Thyroid gland (tissue), 4 donors: ENCODE measurements at regions of chr1 and their contacts with region 1.

Region 1: GRCh38 chr1:25796811-25797458 is 3.1 kb upstream of the SELENON start:
- DNase-seq: peak; percentile 87 to 94
- H3K4me3 ChIP-seq: no peak overlapping the region
- H3K27ac ChIP-seq: peak overlapping the region; percentile 69 to 86 (median 72)
- H3K4me1 ChIP-seq: peaks cover 17 to 34% of the 10 kb centered on the region in 2 donors
- H3K27me3 ChIP-seq: no peaks in the 10 kb centered on the region
- CTCF ChIP-seq: peak in 5 of 6 experiments; percentile 72 to 97 (median 88)
- POLR2A ChIP-seq: no peak

Region 2: DNA sequence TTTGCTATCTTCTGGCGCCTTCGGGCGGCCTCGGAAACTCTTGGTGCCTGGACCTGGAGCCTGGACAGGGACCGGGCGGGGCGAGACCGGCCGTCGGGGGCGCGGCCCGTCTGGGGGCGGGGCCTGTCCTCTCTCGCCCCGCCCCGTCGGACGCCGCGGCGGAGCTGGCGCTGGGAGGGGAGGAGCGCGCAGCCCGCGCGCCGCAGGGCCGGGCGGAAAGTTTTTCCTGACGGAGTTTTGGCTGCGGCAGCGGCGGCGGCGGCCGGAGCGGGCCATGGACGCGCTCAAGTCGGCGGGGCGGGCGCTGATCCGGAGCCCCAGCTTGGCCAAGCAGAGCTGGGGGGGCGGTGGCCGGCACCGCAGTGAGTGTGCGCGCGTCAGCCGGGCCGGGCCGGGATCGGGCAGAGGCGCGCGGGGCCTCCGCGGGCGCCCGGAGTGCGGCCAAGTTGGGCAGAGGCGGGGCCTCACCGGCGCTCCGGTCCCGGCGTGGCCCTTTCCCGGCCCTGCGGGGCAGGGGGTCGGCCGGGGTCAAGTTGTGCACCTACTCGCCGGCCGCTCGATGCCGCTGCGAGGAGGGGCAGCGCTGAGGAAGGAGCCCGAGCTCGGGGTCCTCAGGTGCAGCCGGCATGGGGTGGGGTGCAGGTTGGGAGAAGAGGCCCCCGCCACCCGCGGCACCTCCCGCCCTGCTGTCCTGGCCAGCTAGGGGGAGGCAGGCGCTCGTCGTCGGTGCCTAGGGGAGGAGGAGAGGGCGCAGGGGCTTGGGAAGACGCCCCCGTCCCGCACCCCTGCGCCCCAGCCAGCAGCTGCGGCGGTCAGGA is 253.3 kb before region 1 on chr1 and contains the start of gene LDLRAP1:
- intact Hi-C with region 1: loop called (anchors 10 kb)
- DNase-seq: peak; percentile 75 to 76
- H3K4me3 ChIP-seq: peak within 1 kb of the TSS; percentile 82 to 91 (median 87)
- H3K27ac ChIP-seq: peak within 1 kb of the TSS; percentile 64 to 76 (median 70)
- H3K4me1 ChIP-seq: peaks cover 23 to 31% of the 10 kb centered on the region in 2 donors
- H3K27me3 ChIP-seq: no peaks in the 10 kb centered on the region
- CTCF ChIP-seq: peak in 2 of 6 experiments; percentile 13 to 14
- POLR2A ChIP-seq: peak; percentile 87 to 96
- total RNA-seq, gene LDLRAP1: 25.1 to 40.9 (median 34.4) TPM

Region 3: DNA sequence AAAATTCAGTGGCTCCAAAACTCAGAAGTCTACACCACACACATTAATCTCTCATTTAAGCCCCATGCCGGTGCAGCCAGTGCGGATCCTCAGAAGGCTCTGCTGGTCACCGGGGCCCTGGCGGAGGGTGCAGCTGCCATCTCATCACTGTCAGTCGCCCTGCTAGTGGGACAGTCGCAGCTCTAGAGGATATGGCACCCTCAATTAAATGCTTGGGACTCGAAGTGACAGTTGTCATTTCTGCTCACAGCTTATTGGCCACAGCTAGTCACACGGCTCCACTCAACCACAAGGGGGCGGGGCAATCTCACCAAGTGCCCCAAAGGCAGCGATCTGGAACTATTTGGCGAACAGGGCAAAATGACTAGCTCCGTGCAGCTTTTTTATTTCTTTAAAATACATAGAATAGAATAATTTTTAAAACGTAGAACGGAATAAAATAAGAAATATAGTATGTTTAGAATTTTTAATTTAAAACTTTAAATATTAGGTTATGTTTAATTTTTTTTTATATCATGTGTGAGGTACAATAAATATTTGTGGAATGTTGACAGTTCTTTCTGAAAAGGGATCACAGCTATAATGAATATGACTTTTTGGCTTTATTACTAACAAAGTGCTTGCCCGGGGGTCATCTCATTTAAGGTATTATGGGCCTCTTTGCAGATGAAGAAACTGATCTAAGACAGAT is 188.3 kb before region 1 on chr1:
- intact Hi-C with region 1: loop called (anchors 5 kb)
- DNase-seq: peak; percentile 87 to 92
- H3K4me3 ChIP-seq: no peak overlapping the region
- H3K27ac ChIP-seq: no peak overlapping the region
- H3K4me1 ChIP-seq: no peaks in the 10 kb centered on the region
- H3K27me3 ChIP-seq: no peaks in the 10 kb centered on the region
- CTCF ChIP-seq: peak in 5 of 6 experiments; percentile 25 to 54 (median 49)
- POLR2A ChIP-seq: no peak

Region 4: GRCh38 chr1:25695090-25695770 is 101.7 kb before region 1 on chr1:
- intact Hi-C with region 1: loop called (anchors 5 kb)
- DNase-seq: peak; percentile 89 to 91
- H3K4me3 ChIP-seq: no peak overlapping the region
- H3K27ac ChIP-seq: peak overlapping the region; percentile 93 to 96 (median 94)
- H3K4me1 ChIP-seq: peaks cover 37 to 60% of the 10 kb centered on the region in 2 donors
- H3K27me3 ChIP-seq: no peaks in the 10 kb centered on the region
- CTCF ChIP-seq: peak in 4 of 6 experiments; percentile 18 to 49 (median 35)
- POLR2A ChIP-seq: peak in 1 of 2 donors; percentile 63